Pancreas (tissue), 10 donors: ENCODE measurements at regions of chr3 and their contacts with region 1.

Region 1: GRCh38 chr3:54846119-54846518 is 81.7 kb downstream of the LRTM1 start:
- DNase-seq: no peak
- ATAC-seq: no peak
- H3K4me3 ChIP-seq: no peak overlapping the region
- H3K27ac ChIP-seq: no peak overlapping the region
- H3K4me1 ChIP-seq: no peaks in the 10 kb centered on the region
- H3K27me3 ChIP-seq: no peaks in the 10 kb centered on the region
- CTCF ChIP-seq: no peak

Region 2: DNA sequence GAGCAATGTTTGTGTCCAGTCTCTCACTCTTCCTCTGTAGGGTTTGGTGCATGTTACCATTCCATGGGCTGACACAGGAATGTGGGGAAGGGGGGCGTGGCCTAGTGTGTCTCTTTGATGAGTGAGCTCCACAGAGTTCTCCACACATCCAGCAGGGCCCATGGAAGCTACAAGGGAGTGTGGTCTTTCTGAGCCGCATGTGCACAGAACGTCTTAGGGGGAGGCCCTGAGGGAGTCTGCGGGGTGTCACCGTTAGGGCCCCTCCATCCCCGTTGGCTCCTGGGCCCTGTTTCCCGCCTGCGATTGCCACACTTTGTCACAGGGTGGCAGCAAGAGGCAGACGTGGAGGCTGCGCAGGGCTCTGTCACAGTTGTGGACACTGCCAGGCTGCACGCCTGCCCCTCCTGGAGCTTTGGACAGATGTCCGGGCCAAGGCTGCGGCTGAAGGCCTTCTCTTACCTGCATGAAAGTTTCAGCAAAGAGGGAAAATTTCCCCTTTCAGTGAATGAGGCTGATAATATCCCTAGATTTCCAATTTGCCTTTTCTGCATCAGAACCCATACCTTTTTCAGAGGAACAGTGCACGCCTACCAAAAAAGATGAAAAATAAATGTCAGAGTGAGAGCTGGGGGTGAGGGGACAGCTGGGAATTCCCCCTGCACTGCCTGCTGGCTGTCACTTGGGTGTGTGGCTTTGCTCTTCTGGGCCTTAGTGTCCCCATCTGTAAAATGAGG is 699.4 kb before region 1 on chr3:
- intact Hi-C with region 1: no loop called
- DNase-seq: peak; percentile 22 to 85 (median 59)
- ATAC-seq: peak; percentile 55 to 98 (median 96)
- H3K4me3 ChIP-seq: no peak overlapping the region
- H3K27ac ChIP-seq: no peak overlapping the region
- H3K4me1 ChIP-seq: no peaks in the 10 kb centered on the region
- H3K27me3 ChIP-seq: no peaks in the 10 kb centered on the region
- CTCF ChIP-seq: peak in 3 of 4 donors; percentile 45 to 58 (median 57)

Region 3: GRCh38 chr3:54891548-54892120 is 45.5 kb after region 1 on chr3:
- intact Hi-C with region 1: loop called in 1 of 3 experiments (anchors 5 kb)
- DNase-seq: peak in 5 of 6 donors; percentile 58 to 78 (median 64)
- ATAC-seq: peak; percentile 84 to 96 (median 95)
- H3K4me3 ChIP-seq: no peak overlapping the region
- H3K27ac ChIP-seq: peak overlapping the region; percentile 59 to 69 (median 67)
- H3K4me1 ChIP-seq: no peaks in the 10 kb centered on the region
- H3K27me3 ChIP-seq: no peaks in the 10 kb centered on the region
- CTCF ChIP-seq: peak in 1 of 4 donors; percentile 12

Region 4: GRCh38 chr3:54954022-54954421 is 107.9 kb after region 1 on chr3:
- intact Hi-C with region 1: no loop called
- DNase-seq: no peak
- ATAC-seq: no peak
- H3K4me3 ChIP-seq: no peak overlapping the region
- H3K27ac ChIP-seq: no peak overlapping the region
- H3K4me1 ChIP-seq: no peaks in the 10 kb centered on the region
- H3K27me3 ChIP-seq: no peaks in the 10 kb centered on the region
- CTCF ChIP-seq: no peak